OCI-LY7 (cell line): ENCODE measurements at regions of chr1 and their contacts with region 1.

Region 1: GRCh38 chr1:88683541-88684481 is at the start of gene PKN2:
- DNase-seq: peak; percentile 99
- H3K4me3 ChIP-seq: peak within 1 kb of the TSS; percentile 90
- H3K27ac ChIP-seq: peak within 1 kb of the TSS; percentile 87
- H3K4me1 ChIP-seq: peaks cover 20% of the 10 kb centered on the region
- CTCF ChIP-seq: no peak
- total RNA-seq, gene PKN2: 19.3 and 22.3 TPM in 2 replicates

Region 2: GRCh38 chr1:87335175-87335884 is 1348.5 kb before region 1 on chr1:
- CTCF ChIA-PET with region 1: no interaction called
- POLR2A ChIA-PET with region 1: no interaction called
- intact Hi-C with region 1: loop called (anchors 2 kb)
- DNase-seq: peak; percentile 77
- H3K4me3 ChIP-seq: peak overlapping the region; percentile 67
- H3K27ac ChIP-seq: no peak overlapping the region
- H3K4me1 ChIP-seq: peaks cover 32% of the 10 kb centered on the region
- CTCF ChIP-seq: 0 out of 2 replicates have a peak, but pooled peaks have one; percentile 19

Region 3: DNA sequence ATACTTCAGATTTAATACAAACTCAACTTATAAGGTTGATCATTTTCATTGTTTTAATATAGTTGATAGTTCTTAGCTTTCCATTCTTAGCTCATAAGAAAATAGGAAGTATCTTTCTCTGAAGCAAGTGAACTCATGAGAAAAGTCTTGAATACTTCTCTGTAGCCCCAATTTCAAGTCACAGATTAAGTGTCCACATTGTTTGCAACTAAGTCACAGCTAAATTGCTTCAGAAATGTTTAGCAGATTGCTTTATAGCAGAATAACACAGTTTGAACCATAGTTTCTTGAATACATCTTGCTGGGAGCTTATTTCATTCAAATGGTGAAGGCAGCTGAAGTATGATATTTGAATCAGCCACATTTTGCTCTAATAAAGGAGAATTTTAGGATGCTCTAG is 10.4 kb before region 1 on chr1:
- CTCF ChIA-PET with region 1: interaction called, 4 read pairs
- POLR2A ChIA-PET with region 1: interaction called, 19 read pairs
- intact Hi-C with region 1: no loop called
- DNase-seq: no peak
- H3K4me3 ChIP-seq: no peak overlapping the region
- H3K27ac ChIP-seq: no peak overlapping the region
- H3K4me1 ChIP-seq: no peaks in the 10 kb centered on the region
- CTCF ChIP-seq: no peak

Region 4: GRCh38 chr1:88701275-88701674 is 17.5 kb after region 1 on chr1:
- CTCF ChIA-PET with region 1: interaction called, 3 read pairs
- POLR2A ChIA-PET with region 1: interaction called, 43 read pairs
- intact Hi-C with region 1: no loop called
- DNase-seq: peak; percentile 20
- H3K4me3 ChIP-seq: no peak overlapping the region
- H3K27ac ChIP-seq: no peak overlapping the region
- H3K4me1 ChIP-seq: peaks cover 31% of the 10 kb centered on the region
- CTCF ChIP-seq: no peak

Region 5: GRCh38 chr1:88891318-88891950 is 207.6 kb after region 1 on chr1 and contains the start of gene GTF2B:
- CTCF ChIA-PET with region 1: interaction called, 3 read pairs
- POLR2A ChIA-PET with region 1: interaction called, 17 read pairs
- intact Hi-C with region 1: loop called (anchors 1 kb)
- DNase-seq: peak; percentile 96
- H3K4me3 ChIP-seq: peak within 1 kb of the TSS; percentile 96
- H3K27ac ChIP-seq: peak within 1 kb of the TSS; percentile 63
- H3K4me1 ChIP-seq: peaks cover 26% of the 10 kb centered on the region
- CTCF ChIP-seq: no peak
- total RNA-seq, gene GTF2B: 40.3 and 41.1 TPM in 2 replicates

Region 6: DNA sequence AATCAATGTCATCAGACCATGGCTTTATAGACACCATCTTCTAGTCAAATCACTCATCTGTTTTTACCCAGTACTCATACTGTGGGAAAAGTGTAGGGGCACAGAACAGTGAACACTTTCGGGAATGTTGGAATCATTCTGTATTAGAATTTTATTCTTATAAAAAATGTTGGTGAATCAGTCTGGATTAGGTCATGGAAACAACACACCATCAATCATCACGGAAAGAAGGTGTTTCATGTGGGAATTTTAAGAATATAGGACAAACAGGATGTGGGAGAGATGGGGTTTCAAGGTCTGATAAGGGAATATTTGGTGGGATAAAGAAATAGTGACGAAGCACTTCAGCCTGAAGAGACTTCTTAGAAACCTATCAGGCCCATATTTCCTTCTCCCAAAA is 363.9 kb after region 1 on chr1:
- CTCF ChIA-PET with region 1: no interaction called
- POLR2A ChIA-PET with region 1: no interaction called
- intact Hi-C with region 1: no loop called
- DNase-seq: no peak
- H3K4me3 ChIP-seq: no peak overlapping the region
- H3K27ac ChIP-seq: no peak overlapping the region
- H3K4me1 ChIP-seq: no peaks in the 10 kb centered on the region
- CTCF ChIP-seq: no peak